ENCODE measurements at regions of chr5 and their contacts with region 1.

Region 1: GRCh38 chr5:55982957-55983381 is 11.8 kb downstream of the IL6ST start:
- DNase-seq: peak; percentile 50
- H3K4me3 ChIP-seq: peak overlapping the region in 1 of 4 donors; percentile 27
- H3K27ac ChIP-seq: peak overlapping the region in 3 of 4 donors; percentile 5 to 41 (median 16)
- H3K4me1 ChIP-seq: peaks cover 0 to 43% (median 16%) of the 10 kb centered on the region in 4 donors
- H3K27me3 ChIP-seq: no peaks in the 10 kb centered on the region
- CTCF ChIP-seq: peak in 3 of 5 experiments; percentile 17 to 45 (median 28)
- EP300 ChIP-seq: no peak
- POLR2A ChIP-seq: no peak

Region 2: DNA sequence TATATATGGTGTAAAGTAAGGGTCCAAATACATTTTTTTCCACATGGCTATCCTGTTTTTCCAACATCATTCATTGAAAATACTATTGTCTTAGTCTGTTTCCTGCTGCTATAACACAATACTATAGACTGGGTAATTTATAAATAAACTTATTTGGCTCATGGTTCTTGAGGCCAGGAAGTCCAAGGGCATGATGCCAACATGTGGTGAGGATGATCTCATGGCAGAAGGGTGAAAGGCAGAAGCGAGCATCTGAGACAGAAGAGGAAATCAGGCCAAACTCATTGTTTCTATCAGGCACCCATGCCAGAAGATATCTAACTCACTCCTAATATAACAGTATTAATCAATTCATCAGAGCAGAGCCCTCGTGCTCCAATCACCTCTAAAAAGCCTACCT is 207.5 kb after region 1 on chr5:
- in situ Hi-C with region 1: loop called in 1 of 4 experiments (anchors 10 kb)
- intact Hi-C with region 1: no loop called
- DNase-seq: peak; percentile 33
- H3K4me3 ChIP-seq: no peak overlapping the region
- H3K27ac ChIP-seq: no peak overlapping the region
- H3K4me1 ChIP-seq: no peaks in the 10 kb centered on the region
- H3K27me3 ChIP-seq: no peaks in the 10 kb centered on the region
- CTCF ChIP-seq: no peak
- EP300 ChIP-seq: no peak
- POLR2A ChIP-seq: no peak